ENCODE measurements at regions of chr19 and their contacts with region 1.

Region 1: DNA sequence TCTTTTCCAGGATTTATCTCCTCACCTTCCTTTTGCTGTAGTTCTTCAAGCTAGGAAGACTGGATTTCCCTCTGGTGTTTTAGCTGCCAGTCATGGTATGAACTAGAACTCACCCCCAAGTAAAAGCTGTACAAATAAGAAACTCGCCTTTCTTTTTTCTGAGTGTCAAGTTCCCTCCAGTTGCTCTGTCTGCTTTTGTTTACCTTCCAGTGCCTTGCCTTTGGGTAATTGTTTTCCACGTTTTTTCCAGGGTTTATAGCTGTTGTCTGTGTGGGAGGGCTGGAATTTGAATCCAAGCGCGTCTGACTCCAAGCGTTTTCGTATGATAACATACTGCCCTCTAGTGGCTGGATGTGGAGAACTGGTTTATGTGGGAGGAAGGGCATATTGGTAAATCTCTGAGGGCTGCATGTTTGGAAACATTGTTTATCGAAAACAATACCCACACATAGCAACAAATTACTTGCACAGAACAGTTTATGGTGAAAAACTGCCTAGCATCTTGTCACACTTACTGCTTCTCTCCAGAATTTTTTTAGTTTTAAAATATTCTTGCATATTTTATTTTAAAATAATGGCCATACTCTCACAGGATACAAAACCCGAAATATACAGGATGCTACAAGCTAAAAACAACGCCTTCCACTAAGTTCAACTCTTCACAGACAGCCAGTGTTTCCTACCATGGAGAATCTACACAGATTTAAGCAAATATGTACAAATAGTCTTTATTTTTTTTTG is 19.2 kb downstream of the RCN3 start:
- DNase-seq: peak; percentile 82
- H3K4me3 Mint-ChIP-seq: peak overlapping the region; percentile 68
- H3K27ac Mint-ChIP-seq: no peak overlapping the region
- H3K4me1 Mint-ChIP-seq: peaks cover 44% of the 10 kb centered on the region
- H3K27me3 Mint-ChIP-seq: no peaks in the 10 kb centered on the region

Region 2: GRCh38 chr19:49502866-49503581 is 44.0 kb before region 1 on chr19:
- CTCF ChIA-PET with region 1: interaction called, 6 read pairs
- intact Hi-C with region 1: loop called (anchors 1 kb)
- DNase-seq: peak; percentile 63
- H3K4me3 Mint-ChIP-seq: no peak overlapping the region
- H3K27ac Mint-ChIP-seq: no peak overlapping the region
- H3K4me1 Mint-ChIP-seq: peaks cover 47% of the 10 kb centered on the region
- H3K27me3 Mint-ChIP-seq: no peaks in the 10 kb centered on the region

Region 3: GRCh38 chr19:49512970-49513745 is 33.8 kb before region 1 on chr19:
- CTCF ChIA-PET with region 1: interaction called, 17 read pairs
- intact Hi-C with region 1: no loop called
- DNase-seq: peak; percentile 42
- H3K4me3 Mint-ChIP-seq: peak overlapping the region; percentile 70
- H3K27ac Mint-ChIP-seq: no peak overlapping the region
- H3K4me1 Mint-ChIP-seq: peaks cover 27% of the 10 kb centered on the region
- H3K27me3 Mint-ChIP-seq: no peaks in the 10 kb centered on the region

Region 4: GRCh38 chr19:49533551-49534488 is 13.2 kb before region 1 on chr19:
- CTCF ChIA-PET with region 1: interaction called, 34 read pairs
- intact Hi-C with region 1: loop called (anchors 2 kb)
- DNase-seq: peak; percentile 82
- H3K4me3 Mint-ChIP-seq: peak overlapping the region; percentile 83
- H3K27ac Mint-ChIP-seq: no peak overlapping the region
- H3K4me1 Mint-ChIP-seq: peaks cover 21% of the 10 kb centered on the region
- H3K27me3 Mint-ChIP-seq: no peaks in the 10 kb centered on the region

Region 5: DNA sequence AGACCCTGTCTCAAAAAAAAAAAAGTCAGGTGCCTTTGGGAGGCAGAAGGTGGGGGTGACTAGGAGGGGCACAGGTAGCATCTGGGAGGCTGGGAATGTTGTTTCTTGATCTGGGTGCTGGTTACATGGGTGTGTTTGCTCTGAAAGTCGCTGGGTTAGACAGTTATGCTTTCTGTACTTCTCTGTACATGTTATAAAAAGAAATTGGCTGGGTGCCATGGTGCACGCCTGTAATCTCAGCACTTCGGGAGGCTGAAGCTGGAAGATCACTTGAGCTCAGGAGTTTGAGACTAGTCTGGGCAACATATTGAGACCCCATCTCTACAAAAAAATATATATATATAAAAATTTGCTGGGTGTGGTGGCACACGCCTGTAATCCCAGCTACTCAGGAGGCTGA is 18.3 kb after region 1 on chr19:
- CTCF ChIA-PET with region 1: interaction called, 101 read pairs
- intact Hi-C with region 1: loop called (anchors 1 kb)
- DNase-seq: no peak
- H3K4me3 Mint-ChIP-seq: no peak overlapping the region
- H3K27ac Mint-ChIP-seq: peak overlapping the region; percentile 98
- H3K4me1 Mint-ChIP-seq: peaks cover 81% of the 10 kb centered on the region
- H3K27me3 Mint-ChIP-seq: no peaks in the 10 kb centered on the region

Region 6: DNA sequence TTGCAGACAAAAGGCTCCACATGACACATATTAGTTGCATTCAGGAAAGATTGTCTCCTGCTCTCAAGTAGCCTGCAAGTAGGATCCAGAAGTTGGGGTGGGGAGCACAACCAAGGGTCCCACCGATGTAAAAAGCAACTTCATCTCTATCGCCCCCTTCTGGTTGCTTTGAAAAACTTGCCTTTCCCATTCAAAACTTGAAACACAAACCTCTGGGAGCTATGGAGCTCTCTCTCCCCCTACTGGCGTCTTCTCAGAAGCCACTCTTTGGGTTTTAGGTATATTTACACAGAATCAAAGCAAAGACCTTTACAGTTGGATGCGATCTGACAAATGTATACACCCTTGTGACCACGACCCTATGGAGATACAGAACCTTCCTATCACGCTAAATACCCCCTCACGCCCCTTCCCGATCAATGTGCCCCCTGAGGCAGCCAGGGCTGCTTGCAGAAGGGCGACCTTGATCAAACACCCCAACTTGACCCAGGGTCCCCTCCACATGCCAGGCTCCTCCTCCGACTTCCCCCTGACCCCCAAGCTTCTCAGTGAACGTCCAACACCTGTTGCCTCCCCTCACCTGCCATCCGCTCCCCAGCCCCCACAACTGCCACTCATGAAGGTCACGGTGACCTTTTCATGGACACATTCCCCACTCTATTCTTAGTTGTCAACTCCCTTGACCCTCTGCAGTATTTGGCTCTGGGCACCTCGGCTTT is 23.3 kb after region 1 on chr19:
- CTCF ChIA-PET with region 1: interaction called, 101 read pairs
- intact Hi-C with region 1: loop called (anchors 1 kb)
- DNase-seq: peak; percentile 88
- H3K4me3 Mint-ChIP-seq: no peak overlapping the region
- H3K27ac Mint-ChIP-seq: peak overlapping the region; percentile 0
- H3K4me1 Mint-ChIP-seq: peaks cover 53% of the 10 kb centered on the region
- H3K27me3 Mint-ChIP-seq: no peaks in the 10 kb centered on the region

Region 7: GRCh38 chr19:49580264-49581006 is 33.4 kb after region 1 on chr19 and contains the start of gene NOSIP:
- CTCF ChIA-PET with region 1: interaction called, 11 read pairs
- intact Hi-C with region 1: no loop called
- DNase-seq: peak; percentile 98
- H3K4me3 Mint-ChIP-seq: peak within 1 kb of the TSS; percentile 85
- H3K27ac Mint-ChIP-seq: peak within 1 kb of the TSS; percentile 82
- H3K4me1 Mint-ChIP-seq: peaks cover 36% of the 10 kb centered on the region
- H3K27me3 Mint-ChIP-seq: no peaks in the 10 kb centered on the region
- total RNA-seq, gene NOSIP: 76.4 to 77.4 TPM

Measured in activated naive CD4-positive, alpha-beta T cell treated with anti-CD3 and anti-CD28 coated beads for 36 hours (primary cell).